Naive thymus-derived CD4-positive, alpha-beta T cell (primary cell): ENCODE measurements at regions of chr16 and their contacts with region 1.

Region 1: DNA sequence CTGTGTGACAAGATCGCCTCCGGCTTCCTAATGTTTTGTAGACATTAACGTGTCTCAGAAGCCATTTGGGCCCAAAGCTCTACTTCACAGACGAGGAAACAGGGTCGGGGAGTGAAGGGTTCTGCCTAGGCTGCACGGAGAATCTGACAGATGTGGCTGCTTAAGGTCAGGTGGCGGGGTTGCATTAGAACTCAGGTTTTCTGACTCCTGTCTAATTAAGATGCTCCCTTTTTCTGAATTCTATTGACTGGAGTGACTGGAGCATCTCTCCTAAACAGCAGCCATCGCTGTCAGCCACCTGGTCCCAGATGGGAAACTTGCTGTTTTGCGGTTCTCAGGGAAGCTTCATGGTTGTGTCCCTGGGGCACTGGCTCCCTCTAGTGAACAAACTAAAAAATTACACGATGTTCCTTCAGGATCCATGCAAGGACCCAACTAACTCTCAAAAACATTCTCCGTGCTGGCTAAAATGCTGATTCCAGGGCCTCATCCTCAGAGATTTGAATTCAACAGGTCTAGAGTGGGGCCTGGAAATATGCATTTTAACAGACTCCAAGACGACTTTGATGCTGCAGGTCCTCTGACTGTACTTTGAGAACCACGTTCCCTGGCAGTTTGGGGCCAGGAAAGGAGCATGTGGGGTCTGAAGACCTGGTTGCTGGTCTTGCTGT is 117.4 kb downstream of the IRF8 start:
- DNase-seq: peak in 6 of 9 donors; percentile 14 to 56 (median 40)
- ATAC-seq: peak; percentile 48
- H3K4me3 ChIP-seq: no peak overlapping the region
- H3K4me3 Mint-ChIP-seq: no peak overlapping the region
- H3K27ac ChIP-seq: no peak overlapping the region
- H3K27ac Mint-ChIP-seq: no peak overlapping the region
- H3K4me1 ChIP-seq: no peaks in the 10 kb centered on the region
- H3K4me1 Mint-ChIP-seq: no peaks in the 10 kb centered on the region
- H3K27me3 ChIP-seq: no peaks in the 10 kb centered on the region
- H3K27me3 Mint-ChIP-seq: peaks cover 15 to 37% (median 33%) of the 10 kb centered on the region in 5 donors

Region 2: DNA sequence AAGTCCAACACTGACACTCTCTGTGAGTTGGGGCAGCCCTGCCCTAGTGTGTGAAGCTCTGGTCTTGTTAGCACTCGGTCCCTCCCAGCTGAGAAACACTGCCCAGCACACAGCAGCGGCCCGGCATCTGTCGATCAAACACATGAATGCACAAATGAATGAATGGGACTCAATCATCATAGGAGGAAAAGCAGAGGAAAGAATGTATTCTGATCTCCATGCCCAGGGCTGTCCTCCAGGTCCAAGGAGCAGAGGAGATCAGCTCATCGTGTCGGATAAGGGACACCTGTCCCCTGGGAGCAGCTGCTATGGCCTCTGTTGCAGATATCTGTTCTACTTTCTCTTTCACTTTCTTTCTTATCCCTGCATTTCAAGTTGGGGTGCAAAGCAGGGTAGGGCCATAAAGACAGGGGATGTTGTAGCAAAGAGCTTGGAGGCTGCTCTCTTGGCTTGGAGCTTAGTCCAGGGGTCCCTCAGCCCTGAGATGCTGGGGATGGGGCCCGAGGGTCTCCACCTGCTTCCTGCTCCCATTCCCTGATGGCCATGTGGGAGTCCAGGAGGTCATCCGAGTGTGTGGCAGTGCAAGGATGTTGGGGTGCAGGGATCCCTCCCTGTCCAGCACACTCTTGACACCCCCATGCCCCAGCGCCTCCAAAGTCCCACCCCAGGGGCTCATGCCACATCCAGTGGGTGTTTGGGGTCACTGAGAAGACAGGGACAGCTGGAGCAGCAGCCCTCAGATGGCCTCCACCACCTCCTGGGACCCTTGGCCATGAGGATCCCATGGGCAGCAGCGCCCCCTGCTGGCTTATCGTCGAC is 29.2 kb before region 1 on chr16:
- CTCF ChIA-PET with region 1: interaction called, 5 read pairs
- POLR2A ChIA-PET with region 1: no interaction called
- intact Hi-C with region 1: loop called in 1 of 2 experiments (anchors 2 kb)
- DNase-seq: peak in 7 of 9 donors; percentile 11 to 44 (median 26)
- ATAC-seq: no peak
- H3K4me3 ChIP-seq: no peak overlapping the region
- H3K4me3 Mint-ChIP-seq: peak overlapping the region in 1 of 10 donors; percentile 56
- H3K27ac ChIP-seq: no peak overlapping the region
- H3K27ac Mint-ChIP-seq: peak overlapping the region in 1 of 9 donors; percentile 81
- H3K4me1 ChIP-seq: peaks cover 3 to 4% of the 10 kb centered on the region in 2 donors
- H3K4me1 Mint-ChIP-seq: peaks cover 0 to 53% (median 6%) of the 10 kb centered on the region in 7 donors
- H3K27me3 ChIP-seq: no peaks in the 10 kb centered on the region
- H3K27me3 Mint-ChIP-seq: peaks cover 0 to 16% (median 5%) of the 10 kb centered on the region in 5 donors